ENCODE measurements at regions of chr1 and their contacts with region 1.

Region 1: DNA sequence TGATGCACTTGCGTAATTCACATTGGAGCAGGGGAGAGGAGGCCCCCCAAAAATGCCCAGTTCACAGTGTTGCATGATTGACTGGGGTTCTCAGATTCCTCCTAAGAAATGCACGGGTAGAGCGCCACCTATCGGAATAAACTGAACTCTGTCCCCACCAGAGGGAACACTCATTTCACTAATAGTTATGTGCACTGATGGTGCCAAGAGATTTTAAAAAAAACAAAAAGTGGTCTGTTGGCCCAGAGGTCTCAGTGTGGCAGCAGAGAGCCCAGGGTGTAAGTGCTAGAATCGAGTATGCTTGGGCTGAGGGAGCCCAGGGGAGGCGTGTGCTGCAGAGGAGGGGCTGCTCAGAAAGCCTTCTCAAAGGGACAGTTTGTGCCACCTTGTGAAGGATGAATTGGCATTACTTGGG is 6.9 kb downstream of the PINK1 start:
- DNase-seq: peak; percentile 37
- H3K4me3 ChIP-seq: no peak overlapping the region
- H3K27ac ChIP-seq: no peak overlapping the region
- H3K4me1 ChIP-seq: no peaks in the 10 kb centered on the region
- H3K27me3 ChIP-seq: no peaks in the 10 kb centered on the region
- CTCF ChIP-seq: peak; percentile 77 to 78

Region 2: DNA sequence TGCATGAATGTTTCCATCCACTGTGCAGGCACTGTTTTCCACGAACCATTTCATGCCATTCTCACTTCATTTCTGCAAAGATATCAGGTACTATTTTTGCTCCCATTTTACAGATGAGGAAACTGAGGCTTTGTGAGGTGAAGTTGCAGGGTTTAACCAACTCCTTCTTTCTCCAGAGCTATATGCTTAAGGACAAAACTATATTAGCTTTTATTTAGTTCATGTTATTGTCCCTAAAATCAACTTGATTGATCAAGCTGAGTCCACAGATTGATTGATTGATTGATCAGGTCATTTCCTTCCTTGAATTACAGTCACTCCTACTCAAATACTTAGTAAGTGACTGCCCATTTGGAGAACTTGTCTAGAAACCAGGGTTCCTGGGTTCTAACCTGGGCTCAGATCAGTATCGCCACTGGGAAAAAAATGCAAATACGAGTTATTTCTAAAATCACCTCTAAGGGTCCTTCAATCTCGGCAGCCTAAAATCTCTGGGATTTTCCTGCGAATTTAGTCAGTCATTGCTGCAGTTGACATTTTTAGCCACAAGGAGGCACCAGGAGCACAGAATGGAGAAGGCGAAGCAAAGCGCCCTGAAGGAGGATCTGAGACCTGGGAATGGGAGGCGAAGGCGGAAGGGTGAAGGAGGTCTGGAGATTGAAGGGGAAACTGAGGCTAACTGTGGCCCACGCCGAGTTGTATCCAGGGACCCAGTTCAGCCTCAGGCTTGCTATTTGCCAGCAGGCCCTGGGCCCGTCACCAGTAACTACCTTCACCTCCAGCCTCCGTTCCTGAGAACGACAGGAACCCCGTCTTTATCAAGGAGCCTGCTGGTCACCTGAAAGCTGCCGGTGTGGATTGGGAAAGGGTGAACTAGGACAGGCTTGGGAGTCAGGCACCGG is 118.0 kb before region 1 on chr1:
- CTCF ChIA-PET with region 1: no interaction called
- dilution Hi-C with region 1: no loop called
- in situ Hi-C with region 1: loop called (anchors 5 kb)
- intact Hi-C with region 1: loop called (anchors 1 kb)
- DNase-seq: peak; percentile 61
- H3K4me3 ChIP-seq: no peak overlapping the region
- H3K27ac ChIP-seq: no peak overlapping the region
- H3K4me1 ChIP-seq: no peaks in the 10 kb centered on the region
- H3K27me3 ChIP-seq: no peaks in the 10 kb centered on the region
- CTCF ChIP-seq: peak; percentile 94 to 98

Region 3: DNA sequence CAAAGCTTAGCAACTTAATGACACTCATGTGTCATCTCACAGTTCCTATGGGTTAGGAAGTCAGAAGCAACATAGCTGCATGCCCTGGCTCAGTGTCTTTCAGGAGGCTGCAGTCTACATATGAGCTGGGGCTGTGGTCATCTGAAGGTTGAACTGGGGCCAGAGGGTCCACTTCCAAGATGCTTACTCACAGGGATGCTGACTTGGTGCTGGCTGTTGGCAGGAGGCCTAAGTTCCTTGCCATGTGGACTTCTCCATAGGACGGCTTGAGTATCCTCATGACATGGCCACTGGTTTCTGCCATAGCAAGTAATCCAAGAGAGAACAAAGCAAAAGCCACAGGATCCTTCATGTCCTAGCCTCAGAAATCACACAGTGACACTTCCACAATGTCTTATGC is 99.9 kb before region 1 on chr1:
- CTCF ChIA-PET with region 1: no interaction called
- dilution Hi-C with region 1: loop called (anchors 5 kb)
- in situ Hi-C with region 1: no loop called
- intact Hi-C with region 1: no loop called
- DNase-seq: no peak
- H3K4me3 ChIP-seq: no peak overlapping the region
- H3K27ac ChIP-seq: no peak overlapping the region
- H3K4me1 ChIP-seq: no peaks in the 10 kb centered on the region
- H3K27me3 ChIP-seq: no peaks in the 10 kb centered on the region
- CTCF ChIP-seq: no peak